ENCODE measurements at regions of chr9 and their contacts with region 1.

Region 1: DNA sequence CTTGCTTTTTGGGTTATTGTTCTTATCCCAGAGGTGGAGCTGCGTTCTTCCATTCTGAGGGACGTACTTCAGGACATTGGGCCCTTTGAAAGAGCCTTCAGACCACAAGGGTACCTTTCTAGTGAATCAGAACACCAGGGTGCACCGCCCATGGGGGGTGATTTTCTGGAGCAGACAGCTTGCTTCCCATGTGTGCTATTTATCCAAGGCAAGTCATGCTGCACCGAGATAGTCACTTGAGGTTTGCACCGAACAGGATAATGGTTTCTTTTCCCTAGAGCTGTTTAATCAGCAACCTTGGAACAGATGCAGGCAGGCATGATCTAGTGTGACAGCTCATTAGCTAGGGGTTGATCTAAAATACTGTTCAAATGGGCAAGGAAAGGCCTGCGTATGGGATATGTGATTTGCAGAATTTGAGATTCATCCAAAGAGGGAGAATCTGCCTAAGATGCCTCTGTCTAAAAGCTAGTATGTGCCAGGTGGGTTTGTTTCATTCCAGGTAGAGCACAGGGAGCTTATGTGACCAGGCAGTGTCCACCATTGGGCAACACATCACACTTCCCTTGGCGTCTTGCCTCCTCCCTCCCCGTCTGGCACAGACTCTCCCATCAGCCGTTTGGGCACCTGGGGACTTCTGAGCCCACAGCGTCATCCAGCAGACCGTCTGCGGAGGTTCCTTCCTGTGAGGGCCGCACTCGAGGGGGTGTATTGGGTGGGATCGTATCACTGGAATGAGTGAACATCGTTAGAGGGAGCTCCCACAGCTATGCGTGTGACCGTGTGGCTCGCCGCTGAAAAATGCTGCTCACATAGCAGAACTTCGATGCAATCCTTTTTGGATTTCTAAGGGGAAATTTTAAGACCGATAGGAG is 23.0 kb downstream of the ABL1 start:
- DNase-seq: no peak
- H3K4me3 ChIP-seq: no peak overlapping the region
- H3K27ac ChIP-seq: no peak overlapping the region
- H3K4me1 ChIP-seq: no peaks in the 10 kb centered on the region
- H3K27me3 ChIP-seq: no peaks in the 10 kb centered on the region

Region 2: DNA sequence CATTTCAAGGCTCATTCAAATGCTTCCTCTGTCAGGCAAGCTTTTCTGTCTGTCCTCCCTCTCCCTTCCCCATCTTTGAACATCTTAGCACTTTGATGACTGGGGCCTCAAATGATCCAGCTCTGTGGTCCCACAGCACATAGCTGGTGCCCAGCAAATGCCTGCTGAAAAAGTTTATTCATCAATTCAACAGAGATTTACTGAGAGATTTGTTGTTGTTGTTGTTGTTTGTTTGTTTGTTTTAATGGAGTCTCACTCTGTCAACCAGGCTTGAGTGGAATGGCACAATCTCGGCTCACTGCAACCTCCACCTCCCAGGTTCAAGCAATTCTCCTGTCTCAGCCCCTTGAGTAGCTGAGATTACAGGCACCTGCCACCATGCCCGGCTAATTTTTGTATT is 170.5 kb before region 1 on chr9:
- CTCF ChIA-PET with region 1: no interaction called
- POLR2A ChIA-PET with region 1: no interaction called
- DNase-seq: no peak
- H3K4me3 ChIP-seq: no peak overlapping the region
- H3K27ac ChIP-seq: no peak overlapping the region
- H3K4me1 ChIP-seq: no peaks in the 10 kb centered on the region
- H3K27me3 ChIP-seq: peaks cover 0 to 23% (median 6%) of the 10 kb centered on the region in 5 experiments

Region 3: GRCh38 chr9:130707225-130707976 is 150.7 kb before region 1 on chr9:
- CTCF ChIA-PET with region 1: interaction called, 249 read pairs
- POLR2A ChIA-PET with region 1: no interaction called
- DNase-seq: peak; percentile 79 to 87 (median 83)
- H3K4me3 ChIP-seq: no peak overlapping the region
- H3K27ac ChIP-seq: no peak overlapping the region
- H3K4me1 ChIP-seq: peaks cover 0 to 3% (median 0%) of the 10 kb centered on the region in 4 experiments
- H3K27me3 ChIP-seq: no peaks in the 10 kb centered on the region

Measured in common myeloid progenitor, CD34-positive (primary cell).